Caco-2 (cell line): ENCODE measurements at regions of chr11 and their contacts with region 1.

Region 1: DNA sequence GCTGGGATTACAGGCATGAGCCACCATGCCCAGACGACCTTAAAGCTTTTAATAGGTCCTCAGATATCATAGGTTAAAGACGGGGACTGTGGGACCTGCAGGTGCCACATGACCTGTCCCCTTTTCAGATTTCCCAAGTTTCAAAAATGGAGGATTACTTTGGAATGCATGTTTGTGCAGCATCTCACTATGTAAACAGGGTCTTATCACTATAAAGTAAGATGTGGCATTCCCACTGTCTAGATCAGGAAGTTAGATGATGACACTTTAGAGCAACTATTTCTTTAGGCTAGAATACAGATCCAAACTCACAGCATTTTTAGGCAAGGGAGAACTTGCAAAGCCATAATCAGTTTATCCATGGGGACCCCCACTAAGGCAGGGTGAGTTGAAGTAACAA is 92.8 kb downstream of the USP35 start:
- DNase-seq: peak in 1 of 2 experiments; percentile 72
- H3K4me3 ChIP-seq: no peak overlapping the region
- H3K4me3 Mint-ChIP-seq: no peak overlapping the region
- H3K27ac Mint-ChIP-seq: no peak overlapping the region
- H3K4me1 ChIP-seq: peaks cover 22% of the 10 kb centered on the region
- H3K4me1 Mint-ChIP-seq: peaks cover 17% of the 10 kb centered on the region
- H3K27me3 ChIP-seq: no peaks in the 10 kb centered on the region
- H3K27me3 Mint-ChIP-seq: no peaks in the 10 kb centered on the region
- CTCF ChIP-seq: no peak

Region 2: DNA sequence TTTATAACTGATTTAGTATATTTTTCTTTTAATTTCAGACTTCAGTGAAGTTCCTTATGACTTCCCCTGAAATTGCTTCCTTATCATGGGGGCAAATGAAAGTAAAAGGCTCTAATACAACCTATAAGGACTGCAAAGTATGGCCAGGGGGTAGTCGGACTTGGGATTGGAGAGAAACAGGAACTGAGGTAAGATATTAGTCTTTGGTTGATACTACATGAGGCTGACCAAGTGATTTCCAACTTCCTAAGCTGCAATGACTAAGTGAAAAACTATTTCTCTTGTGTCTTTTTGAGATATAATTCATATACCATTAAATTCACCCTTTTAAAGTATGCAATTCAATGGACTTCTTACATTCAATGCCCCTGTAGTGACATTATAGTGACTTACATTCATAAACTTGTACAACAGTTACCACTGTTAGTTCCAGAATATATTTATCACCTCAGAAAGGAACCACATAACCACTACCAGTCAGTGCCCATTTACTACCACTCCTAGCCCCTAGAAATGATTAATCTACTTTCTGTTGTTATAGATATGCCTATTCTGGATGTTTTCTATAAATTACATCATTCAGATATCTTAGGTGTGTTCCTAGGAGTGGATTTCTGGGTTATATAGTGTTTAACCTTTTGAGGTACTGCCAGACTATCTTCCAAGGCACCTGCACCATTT is 438.9 kb before region 1 on chr11:
- CTCF ChIA-PET with region 1: no interaction called
- POLR2A ChIA-PET with region 1: no interaction called
- intact Hi-C with region 1: no loop called
- DNase-seq: no peak
- H3K4me3 ChIP-seq: no peak overlapping the region
- H3K4me3 Mint-ChIP-seq: no peak overlapping the region
- H3K27ac Mint-ChIP-seq: no peak overlapping the region
- H3K4me1 ChIP-seq: no peaks in the 10 kb centered on the region
- H3K4me1 Mint-ChIP-seq: no peaks in the 10 kb centered on the region
- H3K27me3 ChIP-seq: no peaks in the 10 kb centered on the region
- H3K27me3 Mint-ChIP-seq: no peaks in the 10 kb centered on the region
- CTCF ChIP-seq: no peak

Region 3: DNA sequence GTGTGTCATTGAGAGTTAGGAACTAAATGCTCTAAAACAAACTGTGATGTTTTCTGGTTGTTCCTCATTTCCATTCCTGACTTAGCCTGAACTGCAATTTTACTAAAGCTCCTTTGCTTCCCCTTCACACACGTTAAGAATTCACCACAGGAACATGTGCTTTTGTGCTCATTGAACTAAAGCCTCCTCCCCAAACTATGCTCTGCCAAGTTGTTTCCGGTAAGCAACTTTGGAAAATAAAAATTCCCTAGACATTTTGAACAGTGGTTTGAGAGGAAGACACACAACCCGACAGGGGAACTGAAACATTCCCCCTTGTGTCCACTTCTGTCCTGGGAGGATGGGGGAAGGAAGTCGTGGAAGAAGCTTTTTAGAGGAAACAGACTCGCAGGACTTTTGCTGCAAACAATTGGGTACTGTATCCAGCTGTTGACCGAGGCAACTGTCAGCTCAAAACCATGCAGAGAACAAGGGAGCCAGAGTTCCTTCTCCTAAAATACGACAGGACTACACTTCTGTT is 69.2 kb after region 1 on chr11:
- CTCF ChIA-PET with region 1: no interaction called
- POLR2A ChIA-PET with region 1: no interaction called
- intact Hi-C with region 1: loop called (anchors 5 kb)
- DNase-seq: no peak
- H3K4me3 ChIP-seq: no peak overlapping the region
- H3K4me3 Mint-ChIP-seq: no peak overlapping the region
- H3K27ac Mint-ChIP-seq: no peak overlapping the region
- H3K4me1 ChIP-seq: peaks cover 29% of the 10 kb centered on the region
- H3K4me1 Mint-ChIP-seq: peaks cover 47% of the 10 kb centered on the region
- H3K27me3 ChIP-seq: no peaks in the 10 kb centered on the region
- H3K27me3 Mint-ChIP-seq: no peaks in the 10 kb centered on the region
- CTCF ChIP-seq: no peak

Region 4: DNA sequence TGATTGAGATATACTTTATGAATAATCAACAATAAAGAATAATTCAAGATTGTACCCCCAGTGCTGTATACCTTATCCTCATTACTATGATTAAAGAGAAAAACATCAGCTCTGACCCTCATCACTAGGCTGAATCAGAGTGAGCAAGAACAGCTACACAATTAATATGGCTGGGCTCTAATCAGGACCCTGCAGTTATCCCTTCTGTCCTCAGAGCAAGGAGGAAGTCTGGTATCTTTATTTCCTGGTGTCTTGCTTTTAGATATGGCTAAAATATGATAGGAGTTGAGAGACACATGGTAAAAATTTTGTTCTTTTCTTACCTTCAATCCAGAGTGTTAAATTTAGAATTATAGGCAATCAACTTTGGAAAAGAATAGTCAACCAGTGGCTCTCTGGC is 164.7 kb after region 1 on chr11:
- CTCF ChIA-PET with region 1: no interaction called
- POLR2A ChIA-PET with region 1: no interaction called
- intact Hi-C with region 1: no loop called
- DNase-seq: no peak
- H3K4me3 ChIP-seq: no peak overlapping the region
- H3K4me3 Mint-ChIP-seq: no peak overlapping the region
- H3K27ac Mint-ChIP-seq: no peak overlapping the region
- H3K4me1 ChIP-seq: peaks cover 8% of the 10 kb centered on the region; the same call in 1 of the 2 replicates
- H3K4me1 Mint-ChIP-seq: peaks cover 13% of the 10 kb centered on the region
- H3K27me3 ChIP-seq: no peaks in the 10 kb centered on the region
- H3K27me3 Mint-ChIP-seq: no peaks in the 10 kb centered on the region
- CTCF ChIP-seq: no peak